Gastrocnemius medialis (tissue), 4 donors: ENCODE measurements at regions of chr17 and their contacts with region 1.

Region 1: GRCh38 chr17:2878793-2879192 is 82.6 kb downstream of the RAP1GAP2 start:
- DNase-seq: no peak
- ATAC-seq: no peak
- H3K4me3 ChIP-seq: no peak overlapping the region
- H3K27ac ChIP-seq: no peak overlapping the region
- H3K4me1 ChIP-seq: no peaks in the 10 kb centered on the region
- H3K27me3 ChIP-seq: no peaks in the 10 kb centered on the region
- CTCF ChIP-seq: no peak
- POLR2A ChIP-seq: no peak

Region 2: GRCh38 chr17:2911035-2911754 is 32.4 kb after region 1 on chr17:
- in situ Hi-C with region 1: no loop called
- intact Hi-C with region 1: loop called (anchors 5 kb)
- DNase-seq: no peak
- ATAC-seq: no peak
- H3K4me3 ChIP-seq: no peak overlapping the region
- H3K27ac ChIP-seq: no peak overlapping the region
- H3K4me1 ChIP-seq: no peaks in the 10 kb centered on the region
- H3K27me3 ChIP-seq: peaks cover 0 to 3% (median 0%) of the 10 kb centered on the region in 3 donors
- CTCF ChIP-seq: no peak
- POLR2A ChIP-seq: no peak

Region 3: DNA sequence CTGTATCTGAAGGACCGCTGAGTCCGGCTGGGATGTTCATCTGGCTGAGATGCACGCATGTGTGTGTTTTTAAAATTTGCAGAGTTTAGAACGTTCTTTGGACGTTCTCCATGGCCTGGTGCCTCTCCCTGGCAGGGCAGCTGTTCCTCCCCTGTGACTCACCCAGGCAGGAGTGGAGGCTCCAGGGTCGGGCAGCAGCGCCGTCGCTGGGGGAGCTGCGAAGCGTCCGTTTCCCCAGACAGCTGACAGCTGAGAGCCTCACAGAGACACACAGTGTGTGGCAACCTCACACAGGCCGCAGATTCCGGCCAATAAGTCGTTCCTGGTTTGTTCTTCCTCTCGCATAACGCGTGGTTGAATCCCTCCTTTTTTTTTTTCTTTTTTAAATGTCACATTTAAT is 104.1 kb after region 1 on chr17:
- in situ Hi-C with region 1: no loop called
- intact Hi-C with region 1: no loop called
- DNase-seq: peak; percentile 90 to 95
- ATAC-seq: peak; percentile 99
- H3K4me3 ChIP-seq: peak overlapping the region in 1 of 4 donors; percentile 32
- H3K27ac ChIP-seq: peak overlapping the region; percentile 45 to 73 (median 62)
- H3K4me1 ChIP-seq: peaks cover 14 to 15% of the 10 kb centered on the region in 2 donors
- H3K27me3 ChIP-seq: no peaks in the 10 kb centered on the region
- CTCF ChIP-seq: peak in 3 of 5 experiments; percentile 32 to 51 (median 44)
- POLR2A ChIP-seq: no peak